Aorta (tissue), 5 donors: ENCODE measurements at regions of chr4 and their contacts with region 1.

Region 1: GRCh38 chr4:16196478-16197393 is 29.5 kb downstream of the TAPT1 start:
- DNase-seq: no peak
- ATAC-seq: peak; percentile 83
- H3K4me3 ChIP-seq: peak overlapping the region; percentile 26 to 84
- H3K27ac ChIP-seq: peak overlapping the region in 1 of 2 donors; percentile 87
- H3K4me1 ChIP-seq: peaks cover 0 to 4% of the 10 kb centered on the region in 2 donors
- H3K27me3 ChIP-seq: no peaks in the 10 kb centered on the region

Region 2: GRCh38 chr4:16026160-16026761 is 170.5 kb before region 1 on chr4:
- intact Hi-C with region 1: loop called (anchors 2 kb)
- DNase-seq: no peak
- ATAC-seq: no peak
- H3K4me3 ChIP-seq: no peak overlapping the region
- H3K27ac ChIP-seq: no peak overlapping the region
- H3K4me1 ChIP-seq: no peaks in the 10 kb centered on the region
- H3K27me3 ChIP-seq: no peaks in the 10 kb centered on the region

Region 3: GRCh38 chr4:16090096-16090705 is 106.5 kb before region 1 on chr4:
- intact Hi-C with region 1: no loop called
- DNase-seq: no peak
- ATAC-seq: no peak
- H3K4me3 ChIP-seq: no peak overlapping the region
- H3K27ac ChIP-seq: no peak overlapping the region
- H3K4me1 ChIP-seq: no peaks in the 10 kb centered on the region
- H3K27me3 ChIP-seq: peaks cover 0 to 1% of the 10 kb centered on the region in 2 donors

Region 4: DNA sequence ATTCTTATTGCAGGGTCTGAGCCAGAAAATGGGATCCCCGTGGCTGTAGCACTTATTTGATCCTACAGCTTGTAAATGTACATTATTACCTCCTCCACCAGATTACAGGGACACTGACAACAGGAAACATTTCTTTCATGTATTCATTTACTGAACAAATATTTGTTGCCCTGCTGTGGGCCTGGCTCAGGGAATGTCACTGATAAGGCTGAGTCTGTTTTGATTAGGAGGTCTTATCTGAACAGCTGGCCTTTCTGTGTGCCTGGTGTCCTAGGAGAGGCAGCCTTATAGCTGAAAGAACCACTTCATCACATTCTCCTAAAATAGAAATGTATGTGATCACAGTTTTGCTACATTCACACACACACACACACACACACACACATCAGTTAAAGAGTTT is 67.4 kb before region 1 on chr4:
- intact Hi-C with region 1: no loop called
- DNase-seq: no peak
- ATAC-seq: no peak
- H3K4me3 ChIP-seq: no peak overlapping the region
- H3K27ac ChIP-seq: no peak overlapping the region
- H3K4me1 ChIP-seq: no peaks in the 10 kb centered on the region
- H3K27me3 ChIP-seq: no peaks in the 10 kb centered on the region

Region 5: GRCh38 chr4:16289897-16290554 is 93.3 kb after region 1 on chr4:
- intact Hi-C with region 1: no loop called
- DNase-seq: no peak
- ATAC-seq: no peak
- H3K4me3 ChIP-seq: no peak overlapping the region
- H3K27ac ChIP-seq: no peak overlapping the region
- H3K4me1 ChIP-seq: no peaks in the 10 kb centered on the region
- H3K27me3 ChIP-seq: no peaks in the 10 kb centered on the region